MCF 10A (cell line): ENCODE measurements at regions of chr12 and their contacts with region 1.

Region 1: DNA sequence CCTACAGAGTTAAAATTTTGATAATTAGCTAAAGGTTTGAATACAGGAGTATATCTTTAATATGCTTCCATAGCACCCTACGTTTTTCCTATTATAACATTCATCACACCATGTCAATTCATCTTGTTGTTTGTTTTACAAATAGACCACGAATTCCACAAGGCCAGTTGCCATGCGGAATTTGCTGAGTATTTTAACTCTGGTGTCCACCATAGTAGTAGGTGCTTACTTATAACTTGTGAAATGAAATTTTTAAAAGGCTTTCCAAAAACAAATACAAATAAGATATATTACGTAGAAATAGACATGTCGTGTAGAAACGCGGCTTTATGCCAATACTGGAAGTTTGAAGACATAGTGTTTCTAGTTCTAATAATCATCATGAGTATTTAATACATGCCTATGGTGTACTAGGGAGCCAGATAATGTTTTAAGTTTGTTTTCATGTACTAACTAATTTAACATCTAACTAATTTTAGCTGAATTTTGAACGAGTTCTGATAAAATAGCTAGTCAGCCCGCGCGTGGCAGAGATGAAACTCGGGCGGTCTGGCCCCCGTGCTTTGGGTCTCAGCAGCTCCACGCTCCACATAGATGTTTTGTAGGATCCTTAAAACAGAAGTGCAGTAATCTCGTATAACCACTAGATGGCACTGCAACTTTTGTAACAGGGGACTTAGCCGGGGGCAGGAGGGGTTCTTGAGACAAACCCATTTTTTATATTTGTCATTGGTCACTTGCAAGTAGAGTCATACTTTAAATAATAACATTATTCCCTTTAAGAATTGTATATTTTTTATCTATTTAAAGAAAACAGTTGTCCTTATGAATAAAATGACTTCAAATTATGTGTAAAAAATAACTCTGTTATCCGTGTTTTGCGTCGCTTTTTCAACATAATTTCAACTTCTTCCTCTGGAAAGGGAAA is 10.2 kb downstream of the CD69 start:
- DNase-seq: peak; percentile 70
- H3K4me3 Mint-ChIP-seq: no peak overlapping the region
- H3K27ac Mint-ChIP-seq: no peak overlapping the region
- H3K4me1 Mint-ChIP-seq: no peaks in the 10 kb centered on the region
- H3K27me3 Mint-ChIP-seq: peaks cover 32% of the 10 kb centered on the region
- CTCF ChIP-seq: peak; percentile 71

Region 2: DNA sequence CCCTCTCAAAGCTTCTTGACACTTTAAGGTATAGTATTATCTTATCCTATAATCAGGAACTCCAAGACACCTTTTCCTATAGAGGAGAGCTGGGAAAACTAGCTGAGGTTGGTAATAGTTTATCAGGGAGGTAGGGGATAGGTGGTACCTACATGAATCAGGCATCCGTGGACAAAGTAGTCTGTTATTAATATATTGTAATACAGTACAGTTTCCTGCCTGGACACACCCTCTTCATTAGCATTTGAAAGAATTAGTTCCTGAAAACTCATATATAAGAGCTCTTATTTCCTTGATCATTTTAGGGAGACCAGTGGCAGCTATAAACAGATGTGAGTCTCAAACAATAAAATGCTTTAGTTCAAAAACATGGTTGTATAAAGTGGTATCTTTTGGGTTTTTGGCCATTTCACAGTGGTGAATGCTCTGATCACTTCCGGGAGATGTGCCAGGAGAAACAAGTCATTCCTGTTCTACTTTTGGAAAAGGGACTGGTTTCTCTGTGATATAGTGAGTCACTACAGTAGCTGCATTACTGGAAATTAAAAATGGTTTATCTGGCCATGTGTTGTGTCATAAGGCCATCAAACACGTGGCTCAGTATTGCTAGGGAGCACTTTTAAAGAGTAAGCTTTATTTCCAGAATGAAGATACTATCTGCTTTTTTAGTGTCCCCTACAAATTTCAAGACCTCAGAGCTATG is 240.9 kb before region 1 on chr12:
- CTCF ChIA-PET with region 1: no interaction called
- POLR2A ChIA-PET with region 1: no interaction called
- intact Hi-C with region 1: no loop called
- DNase-seq: peak; percentile 49
- H3K4me3 Mint-ChIP-seq: no peak overlapping the region
- H3K27ac Mint-ChIP-seq: peak overlapping the region; percentile 54
- H3K4me1 Mint-ChIP-seq: no peaks in the 10 kb centered on the region
- H3K27me3 Mint-ChIP-seq: no peaks in the 10 kb centered on the region
- CTCF ChIP-seq: no peak

Region 3: DNA sequence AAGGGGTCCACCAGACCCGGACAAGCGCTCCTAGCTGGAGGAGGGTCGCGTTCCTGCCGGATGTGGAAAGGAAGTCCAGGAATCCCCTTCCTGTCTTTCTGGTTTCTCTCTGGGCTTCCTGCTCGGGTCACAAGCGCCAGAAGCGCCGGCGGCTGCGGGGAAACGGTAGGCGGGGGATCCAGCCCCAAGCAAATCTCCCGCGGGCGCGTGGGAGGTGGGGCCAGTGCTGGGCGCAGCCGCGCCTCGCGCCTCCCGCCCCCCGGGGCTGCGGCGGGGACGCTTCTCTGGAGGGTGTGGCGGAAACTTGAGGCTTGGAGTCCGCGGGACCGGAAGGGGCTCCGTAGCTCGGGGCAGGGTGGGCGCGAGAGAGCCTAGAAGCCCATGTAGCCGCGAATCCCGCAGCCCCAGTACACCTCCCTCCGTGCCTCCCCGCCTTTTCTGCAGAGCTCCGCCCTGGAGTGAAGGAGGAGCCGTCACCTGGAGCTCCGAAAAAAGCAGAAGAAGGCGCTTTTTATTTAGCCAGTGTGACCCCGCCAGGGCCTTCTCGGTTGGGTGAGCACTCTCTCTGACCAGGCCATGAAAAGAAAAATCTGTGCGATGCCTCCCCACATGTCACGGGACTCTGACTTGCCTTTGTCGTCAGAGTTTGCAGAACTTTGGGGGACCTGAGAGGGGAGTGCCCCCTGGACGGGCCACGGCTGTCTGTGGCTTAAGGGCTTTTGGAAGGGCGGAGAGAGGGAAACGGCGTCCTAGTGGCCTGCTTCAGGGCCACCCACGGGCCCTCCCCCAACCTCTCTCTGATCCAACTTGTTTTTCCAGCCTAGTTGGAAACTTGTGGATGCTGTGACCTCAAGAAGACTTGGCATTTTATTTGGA is 102.5 kb before region 1 on chr12:
- CTCF ChIA-PET with region 1: no interaction called
- POLR2A ChIA-PET with region 1: no interaction called
- intact Hi-C with region 1: no loop called
- DNase-seq: peak; percentile 74
- H3K4me3 Mint-ChIP-seq: peak overlapping the region; percentile 77
- H3K27ac Mint-ChIP-seq: peak overlapping the region; percentile 66
- H3K4me1 Mint-ChIP-seq: peaks cover 29% of the 10 kb centered on the region
- H3K27me3 Mint-ChIP-seq: no peaks in the 10 kb centered on the region
- CTCF ChIP-seq: no peak

Region 4: GRCh38 chr12:9731797-9732196 is 18.7 kb before region 1 on chr12:
- CTCF ChIA-PET with region 1: interaction called, 17 read pairs
- POLR2A ChIA-PET with region 1: no interaction called
- intact Hi-C with region 1: no loop called
- DNase-seq: no peak
- H3K4me3 Mint-ChIP-seq: no peak overlapping the region
- H3K27ac Mint-ChIP-seq: no peak overlapping the region
- H3K4me1 Mint-ChIP-seq: peaks cover 5% of the 10 kb centered on the region
- H3K27me3 Mint-ChIP-seq: no peaks in the 10 kb centered on the region
- CTCF ChIP-seq: no peak

Region 5: GRCh38 chr12:9797722-9798619 is 47.4 kb after region 1 on chr12:
- CTCF ChIA-PET with region 1: interaction called, 67 read pairs
- POLR2A ChIA-PET with region 1: interaction called, 3 read pairs
- intact Hi-C with region 1: loop called (anchors 1 kb)
- DNase-seq: peak; percentile 74
- H3K4me3 Mint-ChIP-seq: no peak overlapping the region
- H3K27ac Mint-ChIP-seq: no peak overlapping the region
- H3K4me1 Mint-ChIP-seq: no peaks in the 10 kb centered on the region
- H3K27me3 Mint-ChIP-seq: no peaks in the 10 kb centered on the region
- CTCF ChIP-seq: peak; percentile 47

Region 6: GRCh38 chr12:9906873-9907272 is 156.3 kb after region 1 on chr12:
- CTCF ChIA-PET with region 1: interaction called, 13 read pairs
- POLR2A ChIA-PET with region 1: no interaction called
- intact Hi-C with region 1: no loop called
- DNase-seq: no peak
- H3K4me3 Mint-ChIP-seq: no peak overlapping the region
- H3K27ac Mint-ChIP-seq: no peak overlapping the region
- H3K4me1 Mint-ChIP-seq: no peaks in the 10 kb centered on the region
- H3K27me3 Mint-ChIP-seq: no peaks in the 10 kb centered on the region
- CTCF ChIP-seq: no peak

Region 7: GRCh38 chr12:10001171-10001776 is 250.7 kb after region 1 on chr12:
- CTCF ChIA-PET with region 1: interaction called, 9 read pairs
- POLR2A ChIA-PET with region 1: interaction called, 3 read pairs
- intact Hi-C with region 1: loop called (anchors 10 kb)
- DNase-seq: no peak
- H3K4me3 Mint-ChIP-seq: no peak overlapping the region
- H3K27ac Mint-ChIP-seq: no peak overlapping the region
- H3K4me1 Mint-ChIP-seq: no peaks in the 10 kb centered on the region
- H3K27me3 Mint-ChIP-seq: no peaks in the 10 kb centered on the region
- CTCF ChIP-seq: no peak

Region 8: GRCh38 chr12:10101042-10101579 is 350.6 kb after region 1 on chr12:
- CTCF ChIA-PET with region 1: interaction called, 17 read pairs
- POLR2A ChIA-PET with region 1: no interaction called
- intact Hi-C with region 1: no loop called
- DNase-seq: peak; percentile 78
- H3K4me3 Mint-ChIP-seq: peak overlapping the region; percentile 38
- H3K27ac Mint-ChIP-seq: peak overlapping the region; percentile 25
- H3K4me1 Mint-ChIP-seq: peaks cover 20% of the 10 kb centered on the region
- H3K27me3 Mint-ChIP-seq: no peaks in the 10 kb centered on the region
- CTCF ChIP-seq: no peak